HEK293T (cell line): ENCODE measurements at regions of chr22 and their contacts with region 1.

Region 1: GRCh38 chr22:23178512-23179254 is 1.6 kb upstream of the BCR start:
- DNase-seq: peak; percentile 87

Region 2: GRCh38 chr22:23128269-23129108 is 50.2 kb before region 1 on chr22:
- CTCF ChIA-PET with region 1: no interaction called
- POLR2A ChIA-PET with region 1: no interaction called
- DNase-seq: peak; percentile 91

Region 3: DNA sequence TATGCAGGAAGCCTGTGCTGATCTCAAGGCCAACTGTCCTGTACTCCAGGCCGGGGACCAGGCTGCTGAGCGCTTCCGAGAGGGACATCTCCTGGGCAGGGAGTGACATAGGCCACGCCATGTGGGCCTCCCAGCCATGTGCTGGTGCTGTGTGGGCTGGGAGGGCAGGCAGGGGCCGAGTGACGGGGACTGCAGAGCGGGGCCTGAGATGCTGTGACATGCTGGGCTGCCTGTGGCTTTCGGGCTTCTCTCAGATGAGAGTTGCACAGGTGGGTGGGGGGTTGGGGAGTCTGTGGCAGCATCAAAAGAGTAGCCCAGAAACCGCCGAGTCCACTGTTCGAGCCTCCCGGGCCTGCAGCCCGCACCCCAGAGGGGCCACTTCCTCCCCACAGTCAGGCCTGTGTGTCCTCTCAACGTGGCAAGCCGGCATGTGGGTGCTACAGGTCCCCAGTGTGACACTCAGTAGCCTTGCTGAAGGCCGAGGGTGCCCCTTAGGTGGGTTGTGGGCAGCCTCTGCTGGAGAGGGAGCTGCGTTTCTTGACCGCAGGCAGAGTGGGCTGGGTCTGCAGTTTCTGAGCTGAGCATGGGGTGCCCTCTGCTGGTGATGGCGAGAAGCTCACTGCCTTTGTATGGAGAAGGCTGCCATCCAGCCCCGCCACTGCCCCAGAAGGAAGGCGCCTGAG is 102.9 kb after region 1 on chr22:
- CTCF ChIA-PET with region 1: interaction called, 30 read pairs
- POLR2A ChIA-PET with region 1: interaction called, 6 read pairs
- DNase-seq: peak; percentile 92